Activated naive CD4-positive, alpha-beta T cell treated with anti-CD3 and anti-CD28 coated beads for 36 hours (primary cell): ENCODE measurements at regions of chr1 and their contacts with region 1.

Region 1: DNA sequence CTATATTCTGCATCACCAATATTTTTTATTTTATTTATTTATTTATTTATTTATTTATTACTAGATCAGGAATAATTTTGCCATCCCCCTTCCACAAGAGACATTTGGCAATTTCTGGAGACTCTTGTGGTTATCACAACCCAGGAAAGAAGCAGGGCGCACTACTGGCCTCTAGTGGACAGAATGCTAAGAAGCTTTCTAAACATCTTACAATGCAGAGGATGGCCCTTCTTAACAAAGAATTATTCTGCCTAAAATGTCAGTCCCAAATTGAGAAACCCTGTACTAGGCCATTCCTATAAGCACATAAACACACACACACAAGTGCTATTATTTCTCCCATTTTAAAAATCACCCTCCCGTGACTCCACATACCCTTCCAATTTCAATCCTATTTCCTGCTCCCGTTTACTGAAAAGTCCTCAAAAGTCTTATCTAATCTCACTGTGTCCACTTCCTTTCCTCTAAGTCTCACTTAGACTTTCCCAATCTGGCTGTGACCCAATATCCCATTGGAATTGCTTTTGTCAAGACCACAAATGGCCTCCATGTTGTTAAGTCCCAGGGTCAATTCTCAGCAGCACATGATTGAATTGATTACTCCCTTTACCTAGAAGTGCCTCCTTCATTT is 43.7 kb upstream of the RNF11 start:
- DNase-seq: peak; percentile 75
- H3K4me3 Mint-ChIP-seq: no peak overlapping the region
- H3K27ac Mint-ChIP-seq: no peak overlapping the region
- H3K4me1 Mint-ChIP-seq: no peaks in the 10 kb centered on the region
- H3K27me3 Mint-ChIP-seq: no peaks in the 10 kb centered on the region

Region 2: DNA sequence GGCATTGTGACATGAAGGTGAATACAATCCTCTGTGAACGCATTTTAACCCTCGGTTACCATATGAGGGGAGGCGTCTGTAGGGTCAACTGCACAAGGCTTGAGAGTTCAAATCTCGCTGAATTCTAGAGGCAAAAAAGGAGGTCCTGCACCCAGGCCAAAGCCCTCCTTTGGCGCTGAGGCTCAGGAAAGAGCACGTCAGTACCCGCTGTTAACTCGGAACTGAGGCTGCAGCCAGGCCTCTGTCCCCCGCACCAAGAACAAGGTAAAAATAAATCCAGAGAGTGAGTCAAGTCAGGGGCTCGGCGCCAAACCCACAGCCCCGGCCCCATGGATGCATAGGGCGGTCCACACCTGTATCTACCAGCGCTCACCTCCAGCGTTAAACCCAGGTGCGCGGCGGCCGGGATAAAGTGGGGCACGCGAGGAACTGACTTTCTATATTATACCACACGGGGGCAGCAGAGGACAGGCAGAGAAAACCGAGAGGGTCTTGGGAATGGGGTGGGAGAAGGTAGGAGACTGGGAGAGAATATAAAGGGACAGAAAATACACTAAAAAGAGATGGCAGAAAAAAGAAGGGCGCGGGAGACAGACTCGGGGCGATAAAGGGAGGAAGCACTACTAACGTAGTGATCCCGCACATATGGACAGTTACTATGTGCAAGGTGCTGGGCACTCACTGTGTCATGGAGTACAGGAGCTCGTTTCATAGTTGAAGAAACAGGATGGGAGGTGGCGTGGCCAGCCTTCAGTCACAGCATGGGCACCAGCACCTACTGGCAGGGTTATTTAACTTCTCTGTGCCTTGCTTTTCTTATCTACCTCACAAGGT is 823.9 kb before region 1 on chr1:
- CTCF ChIA-PET with region 1: no interaction called
- intact Hi-C with region 1: loop called (anchors 1 kb)
- DNase-seq: peak; percentile 48
- H3K4me3 Mint-ChIP-seq: no peak overlapping the region
- H3K27ac Mint-ChIP-seq: no peak overlapping the region
- H3K4me1 Mint-ChIP-seq: no peaks in the 10 kb centered on the region
- H3K27me3 Mint-ChIP-seq: peaks cover 39% of the 10 kb centered on the region

Region 3: GRCh38 chr1:50774759-50775351 is 417.5 kb before region 1 on chr1:
- CTCF ChIA-PET with region 1: interaction called, 70 read pairs
- intact Hi-C with region 1: loop called (anchors 1 kb)
- DNase-seq: peak; percentile 8
- H3K4me3 Mint-ChIP-seq: no peak overlapping the region
- H3K27ac Mint-ChIP-seq: no peak overlapping the region
- H3K4me1 Mint-ChIP-seq: peaks cover 7% of the 10 kb centered on the region
- H3K27me3 Mint-ChIP-seq: no peaks in the 10 kb centered on the region

Region 4: DNA sequence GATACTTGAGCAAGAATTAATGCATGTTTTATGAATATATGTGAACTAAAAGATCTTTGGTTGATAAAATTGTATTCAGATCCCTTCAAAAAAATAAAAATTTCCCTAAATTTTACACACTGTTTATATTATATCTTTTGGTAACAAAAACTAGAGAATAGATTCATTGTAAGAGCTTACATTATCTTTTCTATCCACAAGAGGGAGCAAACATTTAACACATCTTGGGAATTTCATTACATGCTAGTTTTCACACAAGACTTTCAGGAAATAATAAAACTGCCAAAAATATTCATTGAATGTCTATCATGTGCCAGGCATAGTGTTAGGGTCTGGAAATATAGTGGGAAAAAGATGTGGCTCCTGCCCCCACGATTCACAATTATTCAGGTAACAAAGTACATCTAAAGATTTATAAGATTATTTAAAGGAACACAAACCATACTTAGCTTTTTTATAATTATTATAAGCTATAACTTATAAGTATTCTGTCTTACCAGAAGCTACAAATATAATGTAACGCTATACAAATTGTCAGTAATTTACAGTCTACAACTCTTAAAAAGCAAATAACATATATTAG is 262.9 kb before region 1 on chr1:
- CTCF ChIA-PET with region 1: interaction called, 21 read pairs
- intact Hi-C with region 1: loop called (anchors 1 kb)
- DNase-seq: no peak
- H3K4me3 Mint-ChIP-seq: no peak overlapping the region
- H3K27ac Mint-ChIP-seq: no peak overlapping the region
- H3K4me1 Mint-ChIP-seq: peaks cover 22% of the 10 kb centered on the region
- H3K27me3 Mint-ChIP-seq: no peaks in the 10 kb centered on the region

Region 5: GRCh38 chr1:51088488-51088887 is 103.8 kb before region 1 on chr1:
- CTCF ChIA-PET with region 1: interaction called, 26 read pairs
- intact Hi-C with region 1: loop called (anchors 5 kb)
- DNase-seq: no peak
- H3K4me3 Mint-ChIP-seq: no peak overlapping the region
- H3K27ac Mint-ChIP-seq: no peak overlapping the region
- H3K4me1 Mint-ChIP-seq: no peaks in the 10 kb centered on the region
- H3K27me3 Mint-ChIP-seq: peaks cover 33% of the 10 kb centered on the region

Region 6: DNA sequence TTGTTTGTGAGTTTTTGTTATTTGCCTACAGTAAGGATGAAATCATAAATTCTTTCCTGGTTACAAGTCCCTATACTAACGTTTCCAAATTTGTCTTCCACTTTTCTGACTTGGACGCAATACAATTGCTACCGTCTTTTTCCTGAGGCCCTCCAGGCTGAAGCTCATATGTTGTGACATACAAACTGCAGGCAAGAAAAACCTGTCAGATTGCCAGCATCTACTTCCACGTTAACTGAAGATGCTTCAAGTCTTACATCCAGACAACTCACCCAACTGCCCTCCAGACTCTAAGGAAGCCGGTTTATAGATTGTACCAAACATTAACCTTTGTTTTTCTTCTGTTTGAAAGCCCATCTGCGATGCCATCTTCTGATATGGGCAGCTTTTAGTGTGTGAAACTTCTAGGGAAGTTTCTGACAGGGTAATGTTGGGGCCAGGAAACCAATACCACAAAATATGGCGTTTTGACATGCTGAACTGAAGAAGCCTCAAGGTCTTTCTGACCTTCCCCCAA is 22.3 kb after region 1 on chr1:
- CTCF ChIA-PET with region 1: interaction called, 23 read pairs
- intact Hi-C with region 1: no loop called
- DNase-seq: no peak
- H3K4me3 Mint-ChIP-seq: no peak overlapping the region
- H3K27ac Mint-ChIP-seq: no peak overlapping the region
- H3K4me1 Mint-ChIP-seq: peaks cover 14% of the 10 kb centered on the region
- H3K27me3 Mint-ChIP-seq: no peaks in the 10 kb centered on the region